Natural killer cell (primary cell): ENCODE measurements at regions of chr18 and their contacts with region 1.

Region 1: DNA sequence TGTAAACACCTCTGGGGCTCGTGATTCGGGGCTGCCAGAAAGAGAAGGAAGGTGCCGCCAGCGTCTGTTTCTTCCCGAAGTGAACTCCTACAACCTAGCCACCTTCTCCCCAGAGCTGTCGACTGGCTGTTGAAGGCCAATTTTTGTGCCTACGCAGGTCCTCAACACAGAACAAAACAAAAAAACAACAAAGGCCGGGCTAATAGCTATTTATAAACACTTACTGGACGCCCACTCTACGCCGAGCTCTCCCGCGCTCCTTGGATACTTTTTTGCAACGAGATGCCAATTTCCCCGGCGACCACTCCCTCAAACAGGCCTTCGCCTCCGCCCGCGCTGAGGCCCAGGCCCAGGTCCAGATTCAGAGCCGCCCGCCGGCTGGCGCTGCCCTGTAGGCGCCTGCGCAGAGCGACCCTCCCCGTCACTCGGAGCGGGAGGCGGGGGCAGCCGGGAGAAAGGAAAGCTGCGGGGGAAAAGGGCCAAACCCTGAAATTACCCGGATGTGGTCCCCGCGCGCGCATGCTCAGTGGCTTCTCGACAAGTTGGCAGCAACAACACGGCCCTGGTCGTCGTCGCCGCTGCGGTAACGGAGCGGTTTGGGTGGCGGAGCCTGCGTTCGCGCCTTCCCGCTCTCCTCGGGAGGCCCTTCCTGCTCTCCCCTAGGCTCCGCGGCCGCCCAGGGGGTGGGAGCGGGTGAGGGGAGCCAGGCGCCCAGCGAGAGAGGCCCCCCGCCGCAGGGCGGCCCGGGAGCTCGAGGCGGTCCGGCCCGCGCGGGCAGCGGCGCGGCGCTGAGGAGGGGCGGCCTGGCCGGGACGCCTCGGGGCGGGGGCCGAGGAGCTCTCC is at the start of gene SMAD4:
- DNase-seq: peak; percentile 97
- ATAC-seq: peak; percentile 75 to 82 (median 77)
- H3K4me3 ChIP-seq: peak within 1 kb of the TSS; percentile 68
- H3K4me3 Mint-ChIP-seq: peak within 1 kb of the TSS; percentile 99
- H3K27ac ChIP-seq: peak within 1 kb of the TSS; percentile 91
- H3K27ac Mint-ChIP-seq: peak within 1 kb of the TSS; percentile 90 to 95
- H3K4me1 ChIP-seq: peaks cover 20% of the 10 kb centered on the region
- H3K4me1 Mint-ChIP-seq: peaks cover 50 to 53% of the 10 kb centered on the region in 2 donors
- H3K27me3 ChIP-seq: no peaks in the 10 kb centered on the region
- H3K27me3 Mint-ChIP-seq: no peaks in the 10 kb centered on the region
- CTCF ChIP-seq: no peak
- total RNA-seq, gene SMAD4: 63.4 to 92.7 (median 73.8) TPM

Region 2: GRCh38 chr18:50967714-50968661 is 61.9 kb before region 1 on chr18 and contains the start of gene ELAC1:
- intact Hi-C with region 1: loop called (anchors 5 kb)
- DNase-seq: peak; percentile 71 to 82
- ATAC-seq: peak; percentile 91 to 96 (median 93)
- H3K4me3 ChIP-seq: peak within 1 kb of the TSS; percentile 63
- H3K4me3 Mint-ChIP-seq: peak within 1 kb of the TSS; percentile 91
- H3K27ac ChIP-seq: peak within 1 kb of the TSS; percentile 83
- H3K27ac Mint-ChIP-seq: peak within 1 kb of the TSS; percentile 58 to 73
- H3K4me1 ChIP-seq: peaks cover 7% of the 10 kb centered on the region
- H3K4me1 Mint-ChIP-seq: peaks cover 17 to 25% of the 10 kb centered on the region in 2 donors
- H3K27me3 ChIP-seq: no peaks in the 10 kb centered on the region
- H3K27me3 Mint-ChIP-seq: no peaks in the 10 kb centered on the region
- CTCF ChIP-seq: no peak
- total RNA-seq, gene ELAC1: 7.9 to 10.0 (median 8.9) TPM

Region 3: DNA sequence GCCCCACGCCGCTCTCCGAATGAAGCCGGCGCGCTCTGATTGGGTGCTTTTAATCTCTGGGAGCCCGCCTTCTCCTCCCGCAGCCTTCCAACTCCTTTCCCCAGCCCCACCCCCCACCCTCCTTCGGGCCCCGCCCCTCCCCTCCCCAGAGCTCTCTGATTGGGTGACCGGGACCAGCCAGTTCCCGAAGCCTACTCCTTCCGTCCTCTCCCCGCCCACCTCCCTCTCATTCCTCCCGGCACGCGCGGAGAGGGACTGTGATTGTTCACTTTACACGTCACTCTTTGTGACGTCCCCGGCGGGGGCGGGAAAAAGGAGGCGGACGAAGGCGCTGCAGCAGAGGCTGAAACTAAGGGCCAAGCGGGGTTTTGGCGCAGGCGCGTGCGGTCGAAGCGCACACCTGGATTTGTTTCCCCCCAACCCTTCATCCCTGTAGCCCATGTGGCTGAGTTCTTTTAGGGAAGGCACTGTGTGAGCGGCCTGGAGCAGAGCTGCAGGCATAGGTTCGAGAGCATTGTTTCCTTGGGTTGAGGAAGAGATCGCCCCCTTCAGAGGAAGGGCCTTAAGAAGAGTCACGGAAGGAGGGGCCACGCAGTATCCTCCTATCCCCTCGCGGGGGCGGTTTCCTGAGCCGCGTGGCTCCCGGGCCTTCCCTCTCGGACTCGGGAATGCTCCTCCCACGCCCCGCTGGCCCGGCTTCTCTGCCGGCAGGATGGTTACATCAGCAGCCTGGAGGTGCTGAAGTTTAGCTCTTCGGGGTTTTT is 167.9 kb after region 1 on chr18 and contains the start of gene MEX3C:
- intact Hi-C with region 1: loop called (anchors 5 kb)
- DNase-seq: peak; percentile 99 to 100
- ATAC-seq: peak; percentile 79 to 93 (median 79)
- H3K4me3 ChIP-seq: peak within 1 kb of the TSS; percentile 76
- H3K4me3 Mint-ChIP-seq: peak within 1 kb of the TSS; percentile 97
- H3K27ac ChIP-seq: peak within 1 kb of the TSS; percentile 91
- H3K27ac Mint-ChIP-seq: peak within 1 kb of the TSS; percentile 93 to 97
- H3K4me1 ChIP-seq: peaks cover 17% of the 10 kb centered on the region
- H3K4me1 Mint-ChIP-seq: peaks cover 61 to 63% of the 10 kb centered on the region in 2 donors
- H3K27me3 ChIP-seq: no peaks in the 10 kb centered on the region
- H3K27me3 Mint-ChIP-seq: no peaks in the 10 kb centered on the region
- CTCF ChIP-seq: no peak
- total RNA-seq, gene MEX3C: 189 to 205 (median 202) TPM

Region 4: DNA sequence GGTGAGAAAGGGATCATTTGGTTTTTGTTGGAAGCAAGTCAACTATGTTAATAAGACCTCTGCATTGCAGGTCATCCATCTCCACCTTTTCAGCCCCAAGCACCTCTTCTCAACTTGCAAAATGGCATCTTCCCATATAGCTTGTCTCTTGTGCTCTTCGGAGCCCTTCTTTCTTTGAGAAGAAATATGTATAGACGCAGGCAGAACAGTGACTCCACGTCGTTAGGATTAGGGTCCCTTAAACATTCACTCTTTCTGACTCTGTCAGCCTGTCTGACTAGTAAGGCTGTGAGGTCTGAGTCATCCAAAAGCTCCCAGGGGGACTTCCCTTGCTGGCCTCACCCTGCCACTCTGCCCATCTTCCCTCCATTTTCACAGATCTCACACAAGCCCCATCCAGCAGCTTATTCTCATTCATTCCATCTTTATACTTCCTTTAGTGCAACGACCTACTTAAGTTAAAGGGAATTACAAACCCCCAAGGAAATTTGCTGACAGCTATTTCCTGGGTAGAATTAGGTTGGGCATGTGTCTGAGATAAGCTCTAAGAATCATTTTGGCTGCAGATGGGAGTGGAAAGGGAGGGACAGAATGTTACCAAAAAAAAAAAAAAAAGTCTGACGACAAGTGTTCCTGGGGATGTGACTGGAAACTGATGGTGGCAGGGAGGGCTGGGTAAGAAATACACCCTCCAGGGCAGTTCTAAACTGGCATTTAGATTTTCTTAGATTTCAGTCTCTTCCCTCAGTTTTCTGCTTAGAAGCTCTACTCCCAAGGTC is 205.3 kb after region 1 on chr18:
- intact Hi-C with region 1: no loop called
- DNase-seq: peak in 1 of 2 donors; percentile 3
- ATAC-seq: peak; percentile 80 to 92 (median 89)
- H3K4me3 ChIP-seq: no peak overlapping the region
- H3K4me3 Mint-ChIP-seq: peak overlapping the region; percentile 0
- H3K27ac ChIP-seq: no peak overlapping the region
- H3K27ac Mint-ChIP-seq: peak overlapping the region; percentile 59 to 77
- H3K4me1 ChIP-seq: peaks cover 6% of the 10 kb centered on the region
- H3K4me1 Mint-ChIP-seq: peaks cover 23% of the 10 kb centered on the region in 2 donors
- H3K27me3 ChIP-seq: no peaks in the 10 kb centered on the region
- H3K27me3 Mint-ChIP-seq: no peaks in the 10 kb centered on the region
- CTCF ChIP-seq: no peak